ENCODE measurements at regions of chr1 and their contacts with region 1.

Region 1: DNA sequence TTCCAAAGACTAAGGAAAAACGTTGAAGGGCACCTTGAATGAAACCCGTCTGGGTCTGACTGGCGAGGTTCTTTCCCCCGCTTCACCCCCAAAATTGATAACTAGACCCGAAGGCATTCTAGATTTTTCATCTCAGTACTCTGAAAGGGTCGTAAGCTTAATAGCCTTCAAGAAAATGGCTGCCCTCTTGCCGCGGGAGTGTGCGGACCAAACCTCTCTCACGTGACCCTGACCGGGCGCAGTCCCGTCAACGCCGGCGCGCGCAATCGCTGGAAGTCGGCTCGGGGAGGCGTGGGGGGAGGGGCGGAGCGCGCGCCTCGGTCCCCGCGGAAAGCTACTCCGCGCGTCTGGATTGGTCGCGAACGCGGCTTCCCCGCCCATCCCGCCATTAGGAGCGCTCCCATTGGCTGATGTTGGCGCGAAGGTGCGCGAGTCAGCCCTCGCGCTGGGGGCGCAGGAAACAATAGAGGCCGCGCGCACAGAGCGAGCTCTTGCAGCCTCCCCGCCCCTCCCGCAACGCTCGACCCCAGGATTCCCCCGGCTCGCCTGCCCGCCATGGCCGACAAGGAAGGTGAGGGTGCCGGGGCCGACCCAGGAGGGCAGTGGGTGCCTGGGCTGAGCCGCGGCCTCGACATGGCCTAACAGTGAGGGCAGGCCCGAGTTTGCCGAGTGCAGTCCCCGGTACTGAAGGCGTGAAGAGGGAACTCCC is at the start of gene RBBP4:
- DNase-seq: peak; percentile 98
- ATAC-seq: peak; percentile 92
- H3K4me3 Mint-ChIP-seq: peak within 1 kb of the TSS; percentile 98
- H3K27ac Mint-ChIP-seq: peak within 1 kb of the TSS; percentile 99
- H3K4me1 Mint-ChIP-seq: peaks cover 45% of the 10 kb centered on the region
- H3K27me3 Mint-ChIP-seq: no peaks in the 10 kb centered on the region
- total RNA-seq, gene RBBP4: 290 to 298 TPM

Region 2: GRCh38 chr1:32568929-32569328 is 82.0 kb before region 1 on chr1:
- CTCF ChIA-PET with region 1: no interaction called
- POLR2A ChIA-PET with region 1: no interaction called
- DNase-seq: no peak
- ATAC-seq: no peak
- H3K4me3 Mint-ChIP-seq: no peak overlapping the region
- H3K27ac Mint-ChIP-seq: no peak overlapping the region
- H3K4me1 Mint-ChIP-seq: no peaks in the 10 kb centered on the region
- H3K27me3 Mint-ChIP-seq: peaks cover 8% of the 10 kb centered on the region

Region 3: DNA sequence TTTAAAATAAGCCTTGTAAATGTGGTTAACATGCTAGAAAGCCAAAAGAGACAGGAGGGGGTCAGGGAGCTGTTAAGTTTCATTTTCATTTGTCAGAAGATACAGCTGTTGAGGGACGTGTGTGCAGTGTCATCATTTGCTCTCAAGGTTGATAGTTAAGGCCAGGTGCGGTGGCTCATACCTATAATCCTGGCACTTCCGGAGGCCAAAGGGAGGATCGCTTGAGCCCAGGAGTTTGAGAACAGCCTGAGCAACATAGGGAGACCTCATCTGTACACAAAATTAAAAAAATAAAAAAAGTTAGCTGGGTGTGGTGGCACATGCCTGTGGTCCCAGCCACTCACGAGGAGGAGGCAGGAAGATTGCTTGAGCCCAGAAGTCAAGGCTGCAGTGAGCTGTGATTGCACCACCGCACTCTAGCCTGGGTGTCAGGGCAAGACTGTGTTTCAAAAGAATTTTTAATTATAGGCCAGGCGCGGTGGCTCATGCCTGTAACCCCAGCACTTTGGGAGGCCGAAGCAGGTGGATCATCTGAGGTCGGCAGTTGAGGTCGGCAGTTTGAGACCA is 23.2 kb before region 1 on chr1:
- CTCF ChIA-PET with region 1: interaction called, 3 read pairs
- POLR2A ChIA-PET with region 1: interaction called, 16 read pairs
- DNase-seq: peak; percentile 50
- ATAC-seq: peak; percentile 89
- H3K4me3 Mint-ChIP-seq: peak overlapping the region; percentile 23
- H3K27ac Mint-ChIP-seq: peak overlapping the region; percentile 90
- H3K4me1 Mint-ChIP-seq: peaks cover 35% of the 10 kb centered on the region
- H3K27me3 Mint-ChIP-seq: no peaks in the 10 kb centered on the region

Region 4: GRCh38 chr1:32817159-32817814 is 166.4 kb after region 1 on chr1 and contains the starts of genes S100PBP and YARS1:
- CTCF ChIA-PET with region 1: no interaction called
- POLR2A ChIA-PET with region 1: interaction called, 11 read pairs
- DNase-seq: peak; percentile 100
- ATAC-seq: peak; percentile 94
- H3K4me3 Mint-ChIP-seq: peak within 1 kb of the TSS; percentile 84
- H3K27ac Mint-ChIP-seq: peak within 1 kb of the TSS; percentile 94
- H3K4me1 Mint-ChIP-seq: peaks cover 55% of the 10 kb centered on the region
- H3K27me3 Mint-ChIP-seq: no peaks in the 10 kb centered on the region
- total RNA-seq, gene S100PBP: 78.3 to 78.9 TPM
- total RNA-seq, gene YARS1: 175 to 189 TPM

Measured in activated CD8-positive, alpha-beta T cell treated with anti-CD3 and anti-CD28 coated beads, Interleukin-2, amount 10 ng/mL, durations not matched to agents 7 days and 5 days (primary cell).